Heart right ventricle (tissue), 16 donors: ENCODE measurements at regions of chr10 and their contacts with region 1.

Region 1: GRCh38 chr10:93352638-93353383 is 129.3 kb downstream of the MYOF start:
- DNase-seq: no peak
- ATAC-seq: peak in 2 of 8 donors; percentile 28 to 46
- H3K4me3 ChIP-seq: no peak overlapping the region
- H3K27ac ChIP-seq: no peak overlapping the region
- H3K4me1 ChIP-seq: no peaks in the 10 kb centered on the region
- H3K27me3 ChIP-seq: no peaks in the 10 kb centered on the region
- CTCF ChIP-seq: peak; percentile 55 to 81 (median 73)

Region 2: DNA sequence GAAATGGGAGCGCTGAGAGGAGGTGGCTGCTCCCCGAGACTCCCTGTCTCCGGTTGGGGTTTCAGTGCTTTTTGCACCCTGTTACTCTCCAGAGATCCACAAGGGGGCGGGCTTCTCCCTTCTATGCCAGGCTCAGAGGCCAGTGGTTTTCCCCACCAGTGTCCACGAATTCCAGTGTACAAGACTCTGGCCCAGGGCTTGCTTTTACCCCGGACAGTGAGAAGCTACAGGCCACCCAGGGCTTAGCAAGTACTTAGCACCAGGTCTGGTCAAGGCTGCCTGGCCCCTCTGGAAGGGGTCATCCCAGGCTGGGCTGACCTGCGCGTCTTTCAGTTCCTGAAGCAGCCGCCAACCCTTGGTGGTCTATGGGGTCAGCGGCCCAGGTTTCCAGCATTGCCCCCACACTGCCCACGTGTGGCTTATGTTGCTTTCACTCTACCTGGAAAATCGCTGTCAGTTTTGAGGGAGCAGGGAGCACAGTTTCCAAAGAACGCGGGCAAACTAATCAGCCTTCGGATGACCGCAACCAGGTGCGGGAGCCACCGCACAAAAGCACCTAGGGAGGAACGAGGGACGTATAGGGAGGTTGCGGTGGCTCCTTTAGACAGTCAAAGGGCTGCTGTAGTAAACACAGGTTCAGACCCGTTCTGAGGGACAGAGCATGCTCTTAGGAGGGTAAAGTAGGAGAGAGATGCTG is 272.3 kb before region 1 on chr10:
- intact Hi-C with region 1: loop called in 6 of 10 experiments (anchors 5 to 10 kb)
- DNase-seq: peak; percentile 27 to 34
- ATAC-seq: peak; percentile 33 to 83 (median 70)
- H3K4me3 ChIP-seq: no peak overlapping the region
- H3K27ac ChIP-seq: no peak overlapping the region
- H3K4me1 ChIP-seq: peaks cover 0 to 5% (median 0%) of the 10 kb centered on the region in 9 donors
- H3K27me3 ChIP-seq: peaks cover 1 to 63% (median 55%) of the 10 kb centered on the region in 7 donors
- CTCF ChIP-seq: peak; percentile 54 to 87 (median 78)

Region 3: DNA sequence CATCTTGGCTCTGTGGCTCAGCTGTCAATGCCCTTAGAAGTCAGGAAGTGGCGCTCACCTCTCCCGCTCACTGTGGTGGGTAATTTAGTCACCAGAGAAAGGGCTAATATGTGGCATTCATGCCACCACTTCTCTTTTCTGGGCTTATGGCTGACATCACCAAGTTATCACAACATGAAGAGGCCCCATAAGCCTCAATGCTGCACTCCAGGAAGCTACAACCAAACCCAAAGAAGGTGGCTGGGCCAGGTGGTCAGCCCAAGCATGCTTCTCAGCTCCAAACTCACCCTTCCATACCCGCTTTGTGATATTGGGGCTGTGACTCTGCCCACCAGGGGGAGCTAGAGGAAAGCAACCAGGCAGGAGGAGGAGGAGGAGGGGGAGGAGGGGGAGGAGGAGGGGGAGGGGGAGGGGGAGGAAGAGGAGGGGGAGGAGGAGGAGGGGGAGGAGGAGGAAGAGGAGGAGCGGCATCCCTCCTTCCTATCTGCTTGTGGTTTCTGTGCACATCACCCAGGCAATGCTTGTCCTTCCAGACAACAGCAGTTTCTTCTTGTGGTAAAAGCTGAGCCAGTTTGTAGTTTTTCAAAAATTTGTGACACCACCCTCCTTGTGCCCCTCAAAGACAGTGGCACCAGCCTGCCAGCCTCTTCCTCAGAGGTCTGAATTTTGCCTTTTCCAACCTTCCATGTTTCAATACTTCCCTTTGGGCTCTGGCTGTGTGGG is 237.0 kb before region 1 on chr10:
- intact Hi-C with region 1: loop called in 1 of 10 experiments (anchors 5 kb)
- DNase-seq: peak; percentile 53 to 60
- ATAC-seq: peak in 4 of 8 donors; percentile 37 to 70 (median 47)
- H3K4me3 ChIP-seq: no peak overlapping the region
- H3K27ac ChIP-seq: no peak overlapping the region
- H3K4me1 ChIP-seq: no peaks in the 10 kb centered on the region
- H3K27me3 ChIP-seq: peaks cover 0 to 21% (median 16%) of the 10 kb centered on the region in 7 donors
- CTCF ChIP-seq: peak in 8 of 9 donors; percentile 14 to 55 (median 44)

Region 4: DNA sequence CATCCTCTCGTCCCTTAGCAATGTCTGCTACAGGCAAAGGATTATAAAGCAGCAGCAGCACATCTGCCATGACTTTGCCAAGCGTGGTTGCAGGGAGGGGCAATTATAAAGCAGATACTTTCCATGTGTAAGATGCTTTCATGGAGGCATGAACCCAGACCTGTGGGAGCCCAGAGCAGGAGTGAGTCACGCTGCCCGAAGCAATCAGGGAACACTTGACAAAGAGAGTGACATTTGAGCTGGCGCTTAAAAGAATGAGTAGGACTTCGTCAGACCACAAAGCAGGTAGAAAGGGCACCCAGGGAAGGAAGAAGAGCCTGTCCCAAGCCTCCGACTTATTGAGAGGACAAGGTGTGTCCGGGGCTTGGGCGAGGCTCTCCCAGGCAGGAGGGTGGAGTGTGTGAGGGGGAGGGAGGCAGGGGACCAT is 17.9 kb before region 1 on chr10:
- intact Hi-C with region 1: no loop called
- DNase-seq: no peak
- ATAC-seq: peak in 1 of 8 donors; percentile 64
- H3K4me3 ChIP-seq: no peak overlapping the region
- H3K27ac ChIP-seq: no peak overlapping the region
- H3K4me1 ChIP-seq: no peaks in the 10 kb centered on the region
- H3K27me3 ChIP-seq: no peaks in the 10 kb centered on the region
- CTCF ChIP-seq: no peak

Region 5: DNA sequence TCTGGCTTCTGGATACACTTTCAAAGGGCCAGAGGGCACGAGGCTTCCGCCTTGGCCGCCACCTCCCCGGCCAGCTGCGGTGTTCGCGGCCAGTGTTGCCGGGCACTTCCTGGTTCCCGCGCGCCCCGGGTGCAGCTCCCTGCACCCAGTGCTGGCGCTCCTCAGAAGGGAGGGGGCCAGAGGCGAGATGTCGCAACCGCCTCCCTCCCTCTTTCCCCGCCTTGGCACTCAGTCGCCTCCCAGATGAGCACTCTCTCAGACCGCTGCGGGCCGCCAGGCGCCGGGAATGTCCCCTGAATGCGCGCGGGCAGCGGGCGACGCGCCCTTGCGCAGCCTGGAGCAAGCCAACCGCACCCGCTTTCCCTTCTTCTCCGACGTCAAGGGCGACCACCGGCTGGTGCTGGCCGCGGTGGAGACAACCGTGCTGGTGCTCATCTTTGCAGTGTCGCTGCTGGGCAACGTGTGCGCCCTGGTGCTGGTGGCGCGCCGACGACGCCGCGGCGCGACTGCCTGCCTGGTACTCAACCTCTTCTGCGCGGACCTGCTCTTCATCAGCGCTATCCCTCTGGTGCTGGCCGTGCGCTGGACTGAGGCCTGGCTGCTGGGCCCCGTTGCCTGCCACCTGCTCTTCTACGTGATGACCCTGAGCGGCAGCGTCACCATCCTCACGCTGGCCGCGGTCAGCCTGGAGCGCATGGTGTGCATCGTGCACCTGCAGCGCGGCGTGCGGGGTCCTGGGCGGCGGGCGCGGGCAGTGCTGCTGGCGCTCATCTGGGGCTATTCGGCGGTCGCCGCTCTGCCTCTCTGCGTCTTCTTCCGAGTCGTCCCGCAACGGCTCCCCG is 213.8 kb after region 1 on chr10 and contains the start of gene FFAR4:
- intact Hi-C with region 1: no loop called
- DNase-seq: peak; percentile 14 to 56
- ATAC-seq: peak; percentile 57 to 85 (median 71)
- H3K4me3 ChIP-seq: peak within 1 kb of the TSS; percentile 4 to 43 (median 30)
- H3K27ac ChIP-seq: no peak within 1 kb of the TSS
- H3K4me1 ChIP-seq: peaks cover 0 to 19% (median 6%) of the 10 kb centered on the region in 9 donors
- H3K27me3 ChIP-seq: peaks cover 12 to 83% (median 62%) of the 10 kb centered on the region in 7 donors
- CTCF ChIP-seq: no peak
- total RNA-seq, gene FFAR4: 0.11 to 0.37 (median 0.22) TPM in 4 of 10 donors, not detected in the others

Region 6: GRCh38 chr10:93697207-93697606 is 344.4 kb after region 1 on chr10:
- intact Hi-C with region 1: loop called in 1 of 10 experiments (anchors 10 kb)
- DNase-seq: no peak
- ATAC-seq: no peak
- H3K4me3 ChIP-seq: no peak overlapping the region
- H3K27ac ChIP-seq: no peak overlapping the region
- H3K4me1 ChIP-seq: peaks cover 0 to 16% (median 13%) of the 10 kb centered on the region in 9 donors
- H3K27me3 ChIP-seq: no peaks in the 10 kb centered on the region
- CTCF ChIP-seq: no peak